Psoas muscle (tissue), 8 donors: ENCODE measurements at regions of chr20 and their contacts with region 1.

Region 1: GRCh38 chr20:815914-816606 is 17.5 kb upstream of the FAM110A start:
- DNase-seq: peak; percentile 54 to 70
- ATAC-seq: peak; percentile 63 to 73 (median 70)
- H3K4me3 ChIP-seq: no peak overlapping the region
- H3K27ac ChIP-seq: no peak overlapping the region
- H3K4me1 ChIP-seq: peaks cover 3% of the 10 kb centered on the region
- H3K27me3 ChIP-seq: peaks cover 0 to 3% (median 0%) of the 10 kb centered on the region in 3 donors
- CTCF ChIP-seq: peak; percentile 99

Region 2: DNA sequence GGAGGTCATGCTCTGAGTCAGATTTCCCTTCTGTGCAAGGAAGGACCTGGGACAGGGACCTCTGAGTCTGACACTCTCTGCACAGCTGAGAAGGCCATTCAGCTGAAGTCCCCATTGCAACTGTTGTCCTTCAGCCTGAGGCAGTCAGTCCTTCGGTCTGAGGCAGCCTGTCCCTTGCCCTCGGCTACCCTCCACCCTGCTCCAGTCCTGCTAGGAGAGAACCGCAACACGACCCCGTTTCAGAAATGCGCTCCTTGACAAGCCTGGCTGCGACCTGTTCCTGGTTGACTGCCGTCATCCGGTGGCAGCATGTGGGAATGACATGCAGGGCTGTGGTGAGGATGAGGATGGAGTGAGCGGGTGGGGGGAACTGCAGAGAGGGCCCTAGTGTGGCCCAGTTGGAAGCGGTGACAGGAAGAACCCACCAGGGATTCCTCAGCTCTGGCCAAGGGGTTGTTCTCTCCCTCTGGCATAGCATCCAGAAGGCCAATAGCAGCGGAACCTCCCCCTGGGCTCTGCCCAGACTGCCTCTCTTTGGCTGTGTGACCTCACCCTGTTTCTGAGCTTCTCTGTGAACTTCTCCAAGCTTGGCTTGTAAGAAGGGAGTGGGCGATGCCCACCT is 140.4 kb after region 1 on chr20:
- intact Hi-C with region 1: loop called (anchors 1 to 2 kb)
- DNase-seq: peak; percentile 46 to 81
- ATAC-seq: peak; percentile 82 to 95 (median 90)
- H3K4me3 ChIP-seq: no peak overlapping the region
- H3K27ac ChIP-seq: no peak overlapping the region
- H3K4me1 ChIP-seq: no peaks in the 10 kb centered on the region
- H3K27me3 ChIP-seq: peaks cover 0 to 29% (median 0%) of the 10 kb centered on the region in 3 donors
- CTCF ChIP-seq: peak; percentile 98

Region 3: DNA sequence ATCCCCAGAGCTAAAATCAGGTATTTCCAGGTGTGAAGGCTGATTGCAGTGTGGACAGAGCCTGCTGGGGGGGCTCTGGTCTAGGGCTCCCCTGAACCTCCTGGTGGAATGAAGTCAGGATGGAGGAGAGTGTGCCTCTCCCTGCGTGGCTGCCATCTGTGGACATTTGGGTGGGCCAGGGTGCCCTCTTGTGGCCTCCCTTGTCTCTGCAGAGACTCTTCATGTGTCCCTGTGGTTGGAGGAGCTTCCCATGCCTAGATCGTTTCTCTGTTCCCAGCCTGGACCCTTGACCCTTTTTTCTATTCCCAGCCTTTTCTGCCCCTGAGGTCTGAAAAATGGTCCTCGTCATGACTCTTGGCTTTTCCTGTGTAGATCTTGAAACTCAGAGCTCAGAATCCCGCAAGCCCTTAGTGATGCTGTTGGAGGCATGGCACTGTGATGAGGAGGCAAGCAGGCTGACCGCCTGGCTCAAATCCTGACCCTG is 292.4 kb after region 1 on chr20:
- intact Hi-C with region 1: loop called in 1 of 2 experiments (anchors 5 kb)
- DNase-seq: peak; percentile 55 to 58
- ATAC-seq: peak; percentile 57 to 75 (median 74)
- H3K4me3 ChIP-seq: no peak overlapping the region
- H3K27ac ChIP-seq: no peak overlapping the region
- H3K4me1 ChIP-seq: no peaks in the 10 kb centered on the region
- H3K27me3 ChIP-seq: no peaks in the 10 kb centered on the region
- CTCF ChIP-seq: peak; percentile 72